Caco-2 (cell line): ENCODE measurements at regions of chr6 and their contacts with region 1.

Region 1: DNA sequence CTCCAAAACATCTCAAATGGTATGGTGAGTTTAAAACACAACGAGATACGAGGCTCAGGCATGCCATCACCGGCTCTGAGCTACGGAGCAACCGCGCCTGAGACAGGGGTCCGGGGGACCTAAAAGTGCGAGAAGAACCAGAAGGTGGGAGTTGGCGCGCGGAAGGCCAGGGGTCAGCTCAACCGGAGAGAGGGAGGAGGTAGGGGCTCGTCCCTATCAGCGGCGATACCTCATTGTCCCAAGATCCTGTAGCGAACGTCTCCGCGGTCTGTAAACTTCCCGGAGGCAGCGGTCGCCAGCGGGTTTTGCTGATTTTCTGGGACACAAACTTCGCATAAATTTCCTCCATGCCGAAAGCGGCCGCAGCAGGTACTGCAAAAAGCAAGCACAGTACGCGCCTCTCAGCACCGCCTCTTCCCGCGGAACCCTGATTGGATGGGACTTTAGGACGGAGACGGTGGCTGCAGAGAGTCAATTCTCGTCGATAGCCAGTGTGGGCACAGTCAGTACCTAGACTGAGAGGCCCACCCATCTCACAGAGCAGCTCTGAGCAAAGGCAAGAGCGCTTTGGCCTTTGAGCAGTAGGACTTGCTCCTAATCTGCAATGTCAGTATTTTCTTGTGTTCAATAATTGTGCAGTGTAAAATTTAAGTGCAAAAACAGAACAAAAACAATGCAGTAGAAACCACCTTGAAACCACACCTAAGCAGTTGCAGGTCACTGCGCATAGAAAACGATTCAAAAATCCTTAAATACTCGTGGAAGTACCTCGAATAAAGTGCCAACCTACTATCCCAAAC is at the start of gene NUP43:
- DNase-seq: peak; percentile 94 to 96
- H3K4me3 ChIP-seq: peak within 1 kb of the TSS; percentile 68
- H3K4me3 Mint-ChIP-seq: peak within 1 kb of the TSS; percentile 97
- H3K27ac Mint-ChIP-seq: peak within 1 kb of the TSS; percentile 92
- H3K4me1 ChIP-seq: peaks cover 4% of the 10 kb centered on the region; the same call in 1 of the 2 replicates
- H3K4me1 Mint-ChIP-seq: peaks cover 9% of the 10 kb centered on the region
- H3K27me3 ChIP-seq: no peaks in the 10 kb centered on the region
- H3K27me3 Mint-ChIP-seq: no peaks in the 10 kb centered on the region
- CTCF ChIP-seq: peak; percentile 34 to 53
- total RNA-seq, gene NUP43: 64.2 and 65.2 TPM in 2 replicates

Region 2: DNA sequence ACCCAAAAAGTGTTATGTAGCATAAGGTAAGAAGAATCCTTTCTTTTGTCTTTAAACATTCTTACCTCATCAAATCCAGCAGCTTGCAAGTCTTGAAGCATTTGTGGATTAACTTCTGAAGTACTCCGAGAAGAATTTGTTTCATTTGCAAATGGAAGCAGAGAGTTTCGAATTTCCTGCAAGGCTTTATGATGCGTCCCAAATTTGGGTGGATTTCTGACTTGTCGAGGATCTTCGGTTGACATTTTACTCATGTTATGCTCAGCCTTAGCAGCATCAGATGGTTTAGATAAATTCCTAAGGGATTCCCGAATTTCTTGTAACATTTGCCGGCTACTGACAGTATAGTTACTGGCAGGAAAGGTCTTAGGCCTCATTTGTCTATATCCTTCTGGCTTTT is 44.6 kb before region 1 on chr6:
- CTCF ChIA-PET with region 1: no interaction called
- POLR2A ChIA-PET with region 1: no interaction called
- intact Hi-C with region 1: loop called (anchors 5 kb)
- DNase-seq: no peak
- H3K4me3 ChIP-seq: no peak overlapping the region
- H3K4me3 Mint-ChIP-seq: no peak overlapping the region
- H3K27ac Mint-ChIP-seq: no peak overlapping the region
- H3K4me1 ChIP-seq: no peaks in the 10 kb centered on the region
- H3K4me1 Mint-ChIP-seq: no peaks in the 10 kb centered on the region
- H3K27me3 ChIP-seq: no peaks in the 10 kb centered on the region
- H3K27me3 Mint-ChIP-seq: no peaks in the 10 kb centered on the region
- CTCF ChIP-seq: no peak

Region 3: DNA sequence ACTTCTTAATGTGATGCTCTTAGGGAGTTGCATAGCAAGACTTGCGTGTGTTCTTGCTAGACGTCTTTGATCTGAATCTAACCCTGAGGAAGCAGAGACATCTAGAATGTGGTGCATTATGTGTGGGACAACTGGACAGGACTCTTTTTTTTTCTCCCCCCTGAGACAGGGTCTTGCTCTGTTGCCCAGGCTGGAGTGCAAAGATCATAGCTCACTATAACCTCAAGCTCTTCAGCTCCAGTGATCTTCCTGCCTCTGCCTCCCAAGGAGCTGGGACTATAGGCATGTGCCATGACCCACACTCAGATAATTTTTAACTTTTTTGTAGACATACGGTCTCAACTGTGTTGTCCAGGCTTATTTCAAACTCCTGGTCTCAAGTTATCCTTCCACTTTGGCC is 37.2 kb after region 1 on chr6:
- CTCF ChIA-PET with region 1: no interaction called
- POLR2A ChIA-PET with region 1: no interaction called
- intact Hi-C with region 1: no loop called
- DNase-seq: no peak
- H3K4me3 ChIP-seq: no peak overlapping the region
- H3K4me3 Mint-ChIP-seq: no peak overlapping the region
- H3K27ac Mint-ChIP-seq: no peak overlapping the region
- H3K4me1 ChIP-seq: no peaks in the 10 kb centered on the region; the same call in 1 of the 2 replicates
- H3K4me1 Mint-ChIP-seq: no peaks in the 10 kb centered on the region
- H3K27me3 ChIP-seq: no peaks in the 10 kb centered on the region
- H3K27me3 Mint-ChIP-seq: no peaks in the 10 kb centered on the region
- CTCF ChIP-seq: no peak